ENCODE measurements at regions of chr6 and their contacts with region 1.

Region 1: DNA sequence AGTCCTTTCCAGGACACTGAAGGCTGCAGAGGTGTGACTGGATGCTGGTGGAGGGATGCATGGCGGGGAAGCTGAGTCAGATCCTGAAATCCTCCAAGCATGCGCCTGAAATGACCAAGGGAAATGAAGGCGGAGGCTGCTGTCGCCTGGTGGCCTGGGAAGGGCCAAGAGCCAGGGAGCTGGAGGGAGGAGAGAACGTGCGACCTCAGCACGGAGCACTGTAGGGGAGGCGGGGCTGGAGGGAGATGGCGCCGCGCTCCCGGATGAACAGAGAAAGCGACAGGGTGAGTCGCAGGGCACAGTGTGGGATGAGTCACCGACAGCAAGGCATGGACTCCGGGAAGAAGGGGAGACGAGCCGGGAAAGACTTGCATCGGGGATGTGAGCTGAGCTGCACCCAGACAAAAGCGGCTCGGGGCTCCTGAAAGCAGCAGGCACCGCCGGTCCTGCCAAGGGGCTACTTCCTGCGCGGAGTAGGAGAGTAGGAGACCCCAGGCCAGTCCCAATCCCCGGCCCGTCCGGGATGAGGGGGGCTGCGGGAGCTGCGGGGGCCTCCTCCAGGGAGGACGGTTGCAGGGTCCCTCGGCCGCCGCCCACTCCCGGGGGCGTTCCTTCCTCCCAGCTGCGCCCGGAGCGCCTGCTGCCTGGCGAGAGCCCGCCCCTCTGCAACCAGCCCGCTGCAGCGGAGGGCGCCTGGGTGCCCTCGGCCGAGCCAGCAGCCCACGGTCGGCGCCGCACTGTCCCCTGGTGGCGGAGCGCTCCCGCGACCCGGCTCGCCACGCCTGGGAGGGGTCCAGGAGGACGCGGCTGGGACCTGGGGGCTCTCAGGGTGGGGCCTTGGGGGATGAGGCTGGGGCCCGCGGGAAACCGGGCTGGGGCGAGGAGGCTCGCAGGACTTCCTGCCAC is 11.0 kb upstream of the NQO2 start:
- DNase-seq: peak; percentile 81
- H3K4me3 Mint-ChIP-seq: peak overlapping the region; percentile 87
- H3K27ac Mint-ChIP-seq: peak overlapping the region; percentile 95
- H3K4me1 Mint-ChIP-seq: peaks cover 27% of the 10 kb centered on the region
- H3K27me3 Mint-ChIP-seq: peaks cover 5% of the 10 kb centered on the region

Region 2: GRCh38 chr6:2841264-2842138 is 147.2 kb before region 1 on chr6 and contains the start of gene SERPINB1:
- CTCF ChIA-PET with region 1: interaction called, 66 read pairs
- POLR2A ChIA-PET with region 1: interaction called, 57 read pairs
- DNase-seq: peak; percentile 88
- H3K4me3 Mint-ChIP-seq: peak within 1 kb of the TSS; percentile 84
- H3K27ac Mint-ChIP-seq: peak within 1 kb of the TSS; percentile 86
- H3K4me1 Mint-ChIP-seq: peaks cover 66% of the 10 kb centered on the region
- H3K27me3 Mint-ChIP-seq: no peaks in the 10 kb centered on the region
- total RNA-seq, gene SERPINB1: 85.0 to 86.5 TPM

Region 3: GRCh38 chr6:2931970-2932748 is 56.5 kb before region 1 on chr6:
- CTCF ChIA-PET with region 1: interaction called, 19 read pairs
- POLR2A ChIA-PET with region 1: interaction called, 31 read pairs
- DNase-seq: peak; percentile 88
- H3K4me3 Mint-ChIP-seq: no peak overlapping the region
- H3K27ac Mint-ChIP-seq: no peak overlapping the region
- H3K4me1 Mint-ChIP-seq: peaks cover 23% of the 10 kb centered on the region
- H3K27me3 Mint-ChIP-seq: peaks cover 20% of the 10 kb centered on the region

Region 4: DNA sequence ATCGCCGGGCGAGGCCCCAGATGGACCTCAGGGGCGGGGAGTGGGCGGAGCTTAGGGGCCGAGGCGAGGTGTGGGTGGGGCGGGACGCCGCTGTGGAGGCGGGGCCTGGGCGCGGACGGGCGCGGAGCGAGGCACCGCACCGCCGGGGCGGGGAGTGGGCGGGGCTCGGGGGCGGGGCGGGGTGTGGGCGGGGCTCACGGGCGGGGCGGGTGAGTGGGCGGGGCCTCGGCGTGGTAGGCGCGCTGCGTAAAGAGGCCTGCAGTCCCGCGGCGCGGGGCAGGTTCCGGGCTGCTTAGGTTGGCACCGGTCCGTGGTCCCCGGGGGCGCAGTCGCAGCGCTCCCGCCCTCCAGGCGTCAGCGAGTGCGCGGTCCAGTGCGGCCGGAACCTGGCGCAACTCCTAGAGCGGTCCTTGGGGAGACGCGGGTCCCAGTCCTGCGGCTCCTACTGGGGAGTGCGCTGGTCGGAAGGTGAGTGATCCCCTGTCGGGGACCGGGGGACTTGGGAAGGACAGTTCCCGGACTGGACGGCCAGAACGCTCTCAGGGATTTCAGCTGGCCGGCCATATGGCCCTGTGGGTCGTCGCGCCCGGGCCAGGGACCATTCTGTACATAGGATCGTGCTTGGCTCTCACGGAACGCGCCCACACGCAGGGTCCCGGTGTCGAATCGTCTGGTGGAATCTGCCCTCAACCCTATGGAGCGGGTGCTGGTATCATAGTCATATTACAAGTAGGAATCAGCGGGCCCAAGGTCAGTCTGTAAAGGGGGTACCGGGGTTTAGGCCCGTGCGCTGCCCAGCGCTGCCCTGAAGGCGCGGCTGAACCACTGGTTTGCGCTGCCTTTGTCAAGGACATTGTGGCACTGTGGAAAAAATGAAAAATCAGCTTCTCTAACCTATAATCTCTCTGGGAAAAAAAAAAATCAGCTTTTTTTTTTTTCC is 11.2 kb after region 1 on chr6 and contains the start of gene NQO2:
- CTCF ChIA-PET with region 1: interaction called, 16 read pairs
- POLR2A ChIA-PET with region 1: interaction called, 26 read pairs
- DNase-seq: peak; percentile 94
- H3K4me3 Mint-ChIP-seq: peak within 1 kb of the TSS; percentile 88
- H3K27ac Mint-ChIP-seq: peak within 1 kb of the TSS; percentile 83
- H3K4me1 Mint-ChIP-seq: peaks cover 35% of the 10 kb centered on the region
- H3K27me3 Mint-ChIP-seq: peaks cover 2% of the 10 kb centered on the region
- total RNA-seq, gene NQO2: 37.7 to 38.4 TPM

Region 5: DNA sequence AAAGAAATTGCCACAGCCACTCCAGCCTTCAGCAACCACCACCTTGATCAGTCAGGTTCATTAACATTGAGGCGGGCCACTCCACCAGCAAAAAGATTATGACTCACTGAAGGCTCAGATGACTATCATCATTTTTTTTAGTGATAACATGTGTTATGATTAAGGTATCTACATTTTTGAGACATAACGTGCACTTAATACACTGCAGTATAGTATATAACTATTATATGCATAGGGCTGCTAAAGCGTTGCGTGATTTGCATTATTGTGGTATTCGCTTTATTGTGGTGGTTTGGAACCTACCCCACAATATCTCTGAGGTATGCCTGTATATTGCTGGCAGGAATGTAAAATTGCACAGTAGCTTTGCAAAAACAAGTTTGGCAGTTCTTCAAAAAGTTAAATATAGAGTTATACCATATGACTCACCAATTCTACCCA is 72.8 kb after region 1 on chr6:
- CTCF ChIA-PET with region 1: interaction called, 9 read pairs
- POLR2A ChIA-PET with region 1: interaction called, 51 read pairs
- DNase-seq: no peak
- H3K4me3 Mint-ChIP-seq: no peak overlapping the region
- H3K27ac Mint-ChIP-seq: no peak overlapping the region
- H3K4me1 Mint-ChIP-seq: peaks cover 42% of the 10 kb centered on the region
- H3K27me3 Mint-ChIP-seq: peaks cover 8% of the 10 kb centered on the region